ENCODE measurements at regions of chr7 and their contacts with region 1.

Region 1: DNA sequence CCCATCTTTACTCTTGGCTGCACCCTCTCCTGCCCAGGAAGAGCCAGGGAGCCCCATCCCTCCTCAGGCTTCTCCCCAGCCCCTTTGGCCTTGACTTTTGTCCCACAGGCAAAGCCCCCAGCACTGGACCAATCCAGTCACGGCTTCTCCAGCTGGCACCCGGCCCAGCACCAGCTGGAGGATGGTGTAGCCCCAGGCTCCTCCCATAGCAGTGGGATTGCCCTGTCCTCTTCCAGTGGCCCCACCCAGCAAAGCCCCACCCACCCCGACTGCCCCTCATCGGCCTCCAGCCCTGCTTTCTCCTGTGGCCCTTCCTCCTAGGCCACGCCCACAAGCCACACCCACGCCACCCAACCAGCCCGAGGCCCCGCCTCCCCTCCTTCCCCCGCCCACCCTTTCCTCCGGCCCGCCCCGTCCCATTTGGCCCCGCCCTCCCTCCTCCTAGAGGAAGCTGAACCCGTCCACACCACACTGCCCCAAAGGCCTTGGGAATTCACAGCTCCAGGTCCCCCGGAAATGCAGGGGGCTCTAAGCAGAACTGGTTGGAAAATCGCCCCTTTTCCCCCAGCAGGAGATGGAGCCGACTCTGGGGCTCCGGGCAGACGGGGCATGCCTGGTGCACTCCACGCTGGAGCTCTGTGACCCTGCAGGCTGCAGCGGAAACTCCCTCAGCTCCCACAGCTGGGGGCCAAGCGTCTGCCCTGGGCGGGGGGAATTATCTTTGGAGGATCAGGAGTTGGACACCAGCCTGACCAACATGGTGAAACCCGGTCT is 25.2 kb downstream of the GET4 start:
- DNase-seq: peak; percentile 87
- ATAC-seq: peak; percentile 45

Region 2: DNA sequence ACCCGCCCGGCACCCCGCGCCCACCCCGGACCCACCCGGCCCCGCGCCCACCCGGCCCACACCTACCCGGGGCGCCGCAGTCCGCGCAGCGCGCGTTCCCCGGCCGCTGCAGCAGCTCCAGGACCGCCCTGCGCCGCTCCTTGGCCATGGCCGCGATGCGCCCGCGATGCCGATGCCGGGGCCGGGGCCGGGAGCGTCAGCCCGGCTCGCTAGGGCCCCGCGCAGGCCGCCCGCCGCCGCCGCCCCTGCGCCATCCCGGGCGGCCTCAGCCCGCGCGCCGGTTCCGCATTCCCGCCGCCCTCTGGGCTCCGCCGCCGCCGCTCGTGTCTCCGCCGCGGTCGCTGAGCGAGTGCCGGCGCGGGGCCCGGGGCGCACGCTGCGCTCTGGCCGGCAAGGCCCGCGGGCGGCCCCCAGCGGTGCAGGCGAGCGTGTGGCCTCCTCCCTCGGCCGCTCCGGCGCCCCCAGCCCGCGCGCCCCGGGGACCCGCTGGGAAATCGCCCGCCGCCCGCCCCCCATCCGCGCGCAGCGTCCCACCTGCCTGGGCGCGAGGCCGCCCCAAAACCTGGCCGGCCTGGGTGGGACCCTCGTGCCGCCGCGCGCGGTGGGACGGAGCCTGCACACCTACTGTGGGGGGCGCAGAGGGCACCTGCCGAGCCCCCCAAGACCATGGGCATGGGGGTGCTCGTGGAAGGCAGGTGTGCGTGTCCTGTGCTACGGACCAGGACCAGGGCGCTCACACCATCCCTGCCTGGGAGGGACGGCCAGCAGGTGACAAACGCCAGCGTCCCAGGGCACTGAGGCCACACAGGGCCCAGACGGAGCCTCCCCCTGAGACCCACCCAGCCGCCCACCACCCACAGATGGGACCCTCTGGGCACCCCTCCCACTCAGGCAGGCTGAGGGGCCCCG is 53.0 kb after region 1 on chr7 and contains the start of gene ADAP1:
- intact Hi-C with region 1: loop called (anchors 10 kb)
- DNase-seq: peak; percentile 77
- ATAC-seq: peak; percentile 35
- total RNA-seq, gene ADAP1: 10.0 TPM